ENCODE measurements at regions of chr14 and their contacts with region 1.

Region 1: GRCh38 chr14:103628684-103629502 is at the start of gene KLC1:
- DNase-seq: peak; percentile 67 to 91 (median 85)
- ATAC-seq: peak; percentile 83
- H3K4me3 ChIP-seq: peak within 1 kb of the TSS; percentile 84 to 98
- H3K4me3 Mint-ChIP-seq: peak within 1 kb of the TSS; percentile 87
- H3K27ac ChIP-seq: peak within 1 kb of the TSS; percentile 81 to 87
- H3K27ac Mint-ChIP-seq: peak within 1 kb of the TSS; percentile 89
- H3K4me1 ChIP-seq: peaks cover 41% of the 10 kb centered on the region
- H3K4me1 Mint-ChIP-seq: peaks cover 47% of the 10 kb centered on the region
- H3K27me3 ChIP-seq: no peaks in the 10 kb centered on the region
- H3K27me3 Mint-ChIP-seq: no peaks in the 10 kb centered on the region
- CTCF ChIP-seq: no peak
- total RNA-seq, gene KLC1: 119 to 130 TPM

Region 2: GRCh38 chr14:103385152-103385993 is 243.5 kb before region 1 on chr14 and contains the start of gene MARK3:
- CTCF ChIA-PET with region 1: no interaction called
- POLR2A ChIA-PET with region 1: no interaction called
- intact Hi-C with region 1: loop called in 1 of 2 experiments (anchors 10 kb)
- DNase-seq: peak; percentile 91 to 98 (median 96)
- ATAC-seq: peak; percentile 88
- H3K4me3 ChIP-seq: peak within 1 kb of the TSS; percentile 72 to 73
- H3K4me3 Mint-ChIP-seq: peak within 1 kb of the TSS; percentile 97
- H3K27ac ChIP-seq: peak within 1 kb of the TSS; percentile 76 to 92
- H3K27ac Mint-ChIP-seq: peak within 1 kb of the TSS; percentile 96
- H3K4me1 ChIP-seq: peaks cover 26% of the 10 kb centered on the region
- H3K4me1 Mint-ChIP-seq: peaks cover 33% of the 10 kb centered on the region
- H3K27me3 ChIP-seq: no peaks in the 10 kb centered on the region
- H3K27me3 Mint-ChIP-seq: no peaks in the 10 kb centered on the region
- CTCF ChIP-seq: peak; percentile 16
- total RNA-seq, gene MARK3: 123 to 124 TPM

Region 3: DNA sequence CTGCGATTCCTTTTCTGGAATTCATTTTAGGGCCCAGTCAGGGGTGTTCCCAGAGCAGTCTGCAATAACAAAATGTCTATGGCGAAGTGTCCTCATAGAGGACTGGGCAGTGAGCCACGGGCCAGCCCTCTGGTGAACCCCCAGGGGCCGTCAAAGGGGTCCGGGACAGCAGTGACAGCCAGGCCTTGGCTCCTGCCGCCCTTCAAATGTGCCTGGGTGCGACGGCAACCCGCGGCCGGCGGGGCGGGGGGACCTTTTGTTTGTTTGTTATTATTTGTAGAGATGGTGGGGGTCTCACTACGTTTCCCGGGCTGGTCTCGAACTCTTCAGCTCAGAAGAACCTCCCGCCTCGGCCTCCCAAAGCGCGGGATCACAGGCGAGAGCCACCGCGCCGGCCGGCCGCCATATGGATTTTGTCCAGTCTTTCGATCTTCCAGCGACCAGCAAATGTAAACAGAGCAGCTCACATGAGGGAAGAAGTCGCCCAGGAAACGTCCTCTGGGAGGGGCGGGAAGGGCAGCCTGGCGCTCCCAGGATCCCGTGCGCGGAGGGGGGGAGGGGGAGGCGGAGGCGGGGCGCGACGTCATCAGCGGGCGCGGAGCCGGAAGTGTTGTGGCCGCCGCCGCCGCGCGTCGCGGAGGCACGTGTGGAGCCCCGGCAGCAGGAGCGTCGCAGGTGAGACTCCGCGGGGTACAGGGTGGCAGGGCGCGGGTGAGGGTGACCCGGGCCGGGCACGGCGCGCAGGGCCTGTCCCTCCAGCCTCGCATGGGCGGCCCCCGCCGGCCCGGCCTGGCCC is 100.1 kb before region 1 on chr14 and contains the start of gene TRMT61A:
- CTCF ChIA-PET with region 1: no interaction called
- POLR2A ChIA-PET with region 1: no interaction called
- intact Hi-C with region 1: loop called in 1 of 2 experiments (anchors 1 kb)
- DNase-seq: peak; percentile 57 to 89 (median 77)
- ATAC-seq: peak; percentile 90
- H3K4me3 ChIP-seq: peak within 1 kb of the TSS; percentile 87 to 92
- H3K4me3 Mint-ChIP-seq: peak within 1 kb of the TSS; percentile 91
- H3K27ac ChIP-seq: peak within 1 kb of the TSS; percentile 77 to 88
- H3K27ac Mint-ChIP-seq: peak within 1 kb of the TSS; percentile 93
- H3K4me1 ChIP-seq: peaks cover 31% of the 10 kb centered on the region
- H3K4me1 Mint-ChIP-seq: peaks cover 37% of the 10 kb centered on the region
- H3K27me3 ChIP-seq: no peaks in the 10 kb centered on the region
- H3K27me3 Mint-ChIP-seq: peaks cover under 1% of the 10 kb centered on the region
- CTCF ChIP-seq: no peak
- total RNA-seq, gene TRMT61A: 10.9 to 11.6 TPM

Region 4: GRCh38 chr14:103606963-103607668 is 21.8 kb before region 1 on chr14:
- CTCF ChIA-PET with region 1: no interaction called
- POLR2A ChIA-PET with region 1: interaction called, 3 read pairs
- intact Hi-C with region 1: loop called (anchors 1 to 2 kb)
- DNase-seq: peak; percentile 12 to 83 (median 63)
- ATAC-seq: peak; percentile 82
- H3K4me3 ChIP-seq: peak overlapping the region; percentile 16 to 33
- H3K4me3 Mint-ChIP-seq: peak overlapping the region; percentile 74
- H3K27ac ChIP-seq: no peak overlapping the region
- H3K27ac Mint-ChIP-seq: no peak overlapping the region
- H3K4me1 ChIP-seq: peaks cover 19% of the 10 kb centered on the region
- H3K4me1 Mint-ChIP-seq: peaks cover 18% of the 10 kb centered on the region
- H3K27me3 ChIP-seq: no peaks in the 10 kb centered on the region
- H3K27me3 Mint-ChIP-seq: peaks cover 10% of the 10 kb centered on the region
- CTCF ChIP-seq: no peak

Measured in CD8-positive, alpha-beta T cell (primary cell).